SK-N-SH (cell line): ENCODE measurements at regions of chr19 and their contacts with region 1.

Region 1: GRCh38 chr19:4232958-4233853 is 3.9 kb downstream of the EBI3 start:
- DNase-seq: peak; percentile 84
- H3K4me3 ChIP-seq: peak overlapping the region in 1 of 2 experiments; percentile 13; a peak in 1 of 4 replicates
- H3K27ac ChIP-seq: no peak overlapping the region
- H3K4me1 ChIP-seq: peaks cover 0 to 3% of the 10 kb centered on the region in 2 experiments; a peak in 2 of 4 replicates
- H3K27me3 ChIP-seq: no peaks in the 10 kb centered on the region; the same call in 1 of the 2 replicates
- CTCF ChIP-seq: peak; percentile 79
- EP300 ChIP-seq: no peak
- RAD21 ChIP-seq: 0 out of 2 replicates have a peak, but pooled peaks have one; percentile 28

Region 2: DNA sequence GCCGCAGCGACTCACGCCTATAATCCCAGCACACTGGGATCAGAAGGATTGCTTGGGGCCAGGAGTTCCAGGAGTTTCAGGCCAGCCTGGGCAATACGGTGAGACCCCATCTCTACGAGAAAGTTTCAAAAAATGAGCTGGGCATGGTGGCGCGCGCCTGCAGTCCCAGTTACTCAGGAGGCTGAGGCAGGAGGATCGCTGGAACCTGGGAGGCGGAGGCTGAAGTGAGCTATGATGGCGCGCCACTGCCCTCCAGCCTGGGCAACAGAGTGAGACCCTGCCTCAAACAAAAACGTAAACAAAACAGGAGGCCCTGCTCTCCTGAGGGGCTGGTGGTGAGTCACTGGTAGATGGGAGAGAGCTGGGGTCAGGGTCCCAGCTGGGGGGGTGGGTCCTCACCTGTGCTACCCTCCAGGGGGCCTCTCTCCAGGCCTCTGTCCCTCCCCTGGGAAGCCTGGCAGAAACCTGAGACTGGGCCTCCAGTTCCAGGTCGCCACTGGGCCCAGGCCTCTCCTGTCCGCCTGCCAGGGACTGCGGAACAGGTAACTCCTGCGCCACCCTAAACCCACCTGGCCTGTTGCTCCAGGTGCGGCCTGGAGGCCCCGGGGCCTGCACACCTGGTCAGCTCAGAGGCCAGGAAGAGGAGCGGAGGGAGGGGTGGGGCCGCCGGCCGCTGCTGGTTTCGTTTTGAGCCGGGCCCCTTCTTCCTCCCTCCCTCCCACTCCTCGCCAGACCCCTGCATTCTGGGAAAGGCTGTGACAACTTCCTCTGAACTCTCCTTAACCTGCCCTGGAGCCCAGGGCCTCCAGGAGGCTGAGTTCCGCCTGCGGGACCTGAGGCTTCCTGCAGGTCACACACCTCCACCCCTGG is 149.3 kb before region 1 on chr19:
- CTCF ChIA-PET with region 1: no interaction called
- POLR2A ChIA-PET with region 1: no interaction called
- DNase-seq: no peak
- H3K4me3 ChIP-seq: no peak overlapping the region
- H3K27ac ChIP-seq: no peak overlapping the region
- H3K4me1 ChIP-seq: no peaks in the 10 kb centered on the region
- H3K27me3 ChIP-seq: no peaks in the 10 kb centered on the region
- CTCF ChIP-seq: no peak
- EP300 ChIP-seq: no peak
- RAD21 ChIP-seq: no peak

Region 3: DNA sequence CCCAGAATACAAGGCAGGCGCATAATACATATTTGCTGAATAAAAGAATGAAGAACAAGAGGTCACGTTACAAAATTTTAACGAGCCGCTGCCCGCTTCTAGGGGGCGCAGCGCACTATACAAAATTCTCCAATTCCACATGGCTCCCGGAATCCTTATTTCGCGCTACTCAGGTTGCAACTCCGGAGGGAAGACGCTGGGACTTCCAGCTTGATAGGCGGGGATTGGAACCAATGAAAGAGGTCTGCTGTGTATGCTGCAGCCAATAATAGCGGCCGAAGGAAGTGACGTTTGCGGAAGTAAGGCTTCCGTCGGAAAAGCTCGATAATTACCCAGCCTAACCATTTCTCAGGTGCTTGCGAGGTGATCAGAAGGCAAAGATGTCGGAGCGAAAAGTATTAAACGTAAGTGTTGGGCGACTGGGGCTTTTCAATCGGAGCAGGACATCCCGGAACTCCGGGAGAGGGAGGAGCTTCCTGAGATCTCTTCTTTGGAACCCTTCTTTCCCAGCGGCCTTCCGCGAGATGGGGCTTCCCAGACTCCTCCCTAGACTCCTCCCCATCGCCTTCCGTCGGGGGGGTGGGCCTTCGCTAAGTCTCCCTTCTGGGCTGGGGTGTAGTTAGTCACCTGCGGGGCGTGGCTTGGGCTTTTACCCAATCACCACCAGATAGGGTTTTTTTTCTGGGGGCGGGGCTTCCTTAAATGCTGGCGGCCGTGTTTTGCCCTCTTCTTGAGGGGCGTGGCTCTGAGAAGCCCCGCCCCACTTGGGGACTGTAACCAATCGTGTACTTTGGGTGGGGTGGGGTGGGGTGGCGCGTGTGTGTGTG is 13.8 kb after region 1 on chr19 and contains the start of gene YJU2:
- CTCF ChIA-PET with region 1: interaction called, 12 read pairs
- POLR2A ChIA-PET with region 1: interaction called, 4 read pairs
- DNase-seq: peak; percentile 98
- H3K4me3 ChIP-seq: peak within 1 kb of the TSS; percentile 61 to 75
- H3K27ac ChIP-seq: peak within 1 kb of the TSS; percentile 93 to 97
- H3K4me1 ChIP-seq: peaks cover 0 to 7% of the 10 kb centered on the region in 2 experiments; a peak in 1 of 4 replicates
- H3K27me3 ChIP-seq: no peaks in the 10 kb centered on the region
- CTCF ChIP-seq: peak; percentile 63
- EP300 ChIP-seq: peak; percentile 18 to 22; a peak in 1 of 4 replicates
- RAD21 ChIP-seq: peak; percentile 59
- polyA plus RNA-seq, gene YJU2: 25.3 and 29.0 TPM in 2 replicates